Left ventricle myocardium inferior (tissue), 1 donor: ENCODE measurements at regions of chr18 and their contacts with region 1.

Region 1: GRCh38 chr18:32669549-32670165 is 103.2 kb downstream of the KLHL14 start:
- DNase-seq: no peak
- H3K4me3 ChIP-seq: no peak overlapping the region
- H3K27ac ChIP-seq: no peak overlapping the region
- H3K4me1 ChIP-seq: no peaks in the 10 kb centered on the region
- H3K27me3 ChIP-seq: no peaks in the 10 kb centered on the region
- CTCF ChIP-seq: no peak

Region 2: DNA sequence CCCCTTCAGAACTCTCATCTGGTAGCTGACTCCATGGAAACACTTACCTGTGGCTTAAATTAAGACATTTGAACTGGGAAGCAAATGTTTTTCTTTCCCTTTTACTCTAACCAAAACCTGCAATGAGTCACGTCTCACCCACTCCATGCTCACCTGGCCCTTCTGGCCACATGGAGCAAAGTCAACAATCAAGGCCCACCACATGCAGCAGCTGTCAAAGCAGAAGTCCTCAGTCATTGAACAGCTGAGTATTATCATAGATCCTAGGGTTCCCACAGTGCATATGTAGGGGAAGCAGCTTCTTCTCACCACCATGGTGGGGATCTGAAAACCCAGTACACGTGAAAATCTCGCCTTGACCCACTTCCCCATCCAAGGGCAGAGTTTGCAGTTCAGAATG is 492.1 kb before region 1 on chr18:
- intact Hi-C with region 1: no loop called
- DNase-seq: no peak
- H3K4me3 ChIP-seq: no peak overlapping the region
- H3K27ac ChIP-seq: no peak overlapping the region
- H3K4me1 ChIP-seq: peaks cover 17% of the 10 kb centered on the region
- H3K27me3 ChIP-seq: no peaks in the 10 kb centered on the region
- CTCF ChIP-seq: no peak

Region 3: GRCh38 chr18:32618501-32618985 is 51.1 kb before region 1 on chr18:
- intact Hi-C with region 1: loop called (anchors 5 kb)
- DNase-seq: no peak
- H3K4me3 ChIP-seq: no peak overlapping the region
- H3K27ac ChIP-seq: no peak overlapping the region
- H3K4me1 ChIP-seq: no peaks in the 10 kb centered on the region
- H3K27me3 ChIP-seq: no peaks in the 10 kb centered on the region
- CTCF ChIP-seq: no peak